Dendritic cell treated with granulocyte-macrophage colony-stimulating factor and Interleukin-4, amounts not matched to agents 40 ng/mL and 50 ng/mL, for 4 days (primary cell): ENCODE measurements at regions of chr2 and their contacts with region 1.

Region 1: GRCh38 chr2:71798266-71799012 is 345.1 kb downstream of the DYSF start:
- H3K4me3 Mint-ChIP-seq: no peak overlapping the region
- H3K27ac Mint-ChIP-seq: no peak overlapping the region
- H3K4me1 Mint-ChIP-seq: no peaks in the 10 kb centered on the region
- H3K27me3 Mint-ChIP-seq: no peaks in the 10 kb centered on the region

Region 2: GRCh38 chr2:71545572-71546274 is 252.7 kb before region 1 on chr2:
- intact Hi-C with region 1: loop called (anchors 2 kb)
- H3K4me3 Mint-ChIP-seq: no peak overlapping the region
- H3K27ac Mint-ChIP-seq: peak overlapping the region; percentile 54
- H3K4me1 Mint-ChIP-seq: peaks cover 18% of the 10 kb centered on the region
- H3K27me3 Mint-ChIP-seq: peaks cover 6% of the 10 kb centered on the region

Region 3: GRCh38 chr2:71609958-71610357 is 188.5 kb before region 1 on chr2:
- intact Hi-C with region 1: loop called (anchors 1 kb)
- H3K4me3 Mint-ChIP-seq: no peak overlapping the region
- H3K27ac Mint-ChIP-seq: no peak overlapping the region
- H3K4me1 Mint-ChIP-seq: peaks cover 4% of the 10 kb centered on the region
- H3K27me3 Mint-ChIP-seq: no peaks in the 10 kb centered on the region

Region 4: GRCh38 chr2:71749671-71750101 is 48.8 kb before region 1 on chr2:
- intact Hi-C with region 1: no loop called
- H3K4me3 Mint-ChIP-seq: no peak overlapping the region
- H3K27ac Mint-ChIP-seq: no peak overlapping the region
- H3K4me1 Mint-ChIP-seq: no peaks in the 10 kb centered on the region
- H3K27me3 Mint-ChIP-seq: peaks cover 6% of the 10 kb centered on the region